Activated T-helper 2 cell treated with anti-CD3 and anti-CD28 coated beads, Interferon-gamma antibody, Interleukin-2, Interleukin-4, amounts not matched to agents 10 μg/mL and 5 μg/mL and 100 μg/mL, durations not matched to agents 14 hours and 24 hours and 36 hours (primary cell): ENCODE measurements at regions of chr1 and their contacts with region 1.

Region 1: DNA sequence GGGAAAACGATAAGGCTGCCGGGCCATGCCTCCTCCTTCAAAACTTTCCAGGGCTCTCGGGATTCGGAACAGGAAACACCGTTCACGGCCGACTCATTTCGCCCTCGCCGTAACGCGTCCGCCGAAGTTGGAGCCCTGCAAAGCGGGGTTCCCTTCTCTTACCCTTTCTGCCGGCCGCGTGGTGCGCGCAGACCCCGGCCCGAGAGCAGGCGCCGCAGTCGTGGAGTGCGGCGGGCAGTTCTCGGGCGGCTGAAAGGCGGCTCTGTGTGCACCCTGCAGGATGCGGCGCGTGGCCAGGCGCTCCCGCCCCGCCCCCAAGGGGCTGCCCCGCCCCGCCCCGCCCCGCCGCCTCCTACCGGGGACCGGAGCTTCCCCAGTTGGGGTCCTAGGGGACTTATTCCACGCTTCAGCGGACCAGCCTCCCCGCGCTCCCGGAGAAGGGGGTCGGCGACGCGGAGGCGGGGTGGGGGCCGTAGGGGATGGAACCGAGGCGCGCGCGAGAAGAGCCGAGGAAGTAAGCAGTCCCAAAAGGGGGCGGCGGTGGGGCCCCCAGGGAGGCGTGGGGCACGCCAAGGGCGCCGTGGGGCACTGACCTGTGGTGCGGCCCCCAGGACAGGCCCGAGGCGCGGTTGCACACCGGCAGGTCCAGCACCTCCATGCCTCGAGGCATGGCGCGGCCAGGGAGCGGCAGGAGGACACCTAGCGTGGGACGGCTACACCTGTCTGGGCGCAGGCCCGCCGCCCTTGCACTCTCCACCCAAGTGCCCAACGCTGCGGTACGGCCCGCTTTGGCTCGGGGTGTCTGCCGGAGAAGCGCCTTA is at the start of gene MCOLN2:
- DNase-seq: peak; percentile 52
- H3K4me3 Mint-ChIP-seq: peak within 1 kb of the TSS; percentile 94
- H3K27ac Mint-ChIP-seq: peak within 1 kb of the TSS; percentile 93
- H3K4me1 Mint-ChIP-seq: peaks cover 52% of the 10 kb centered on the region
- H3K27me3 Mint-ChIP-seq: peaks cover 28% of the 10 kb centered on the region
- total RNA-seq, gene MCOLN2: 142 and 143 TPM in 2 replicates

Region 2: DNA sequence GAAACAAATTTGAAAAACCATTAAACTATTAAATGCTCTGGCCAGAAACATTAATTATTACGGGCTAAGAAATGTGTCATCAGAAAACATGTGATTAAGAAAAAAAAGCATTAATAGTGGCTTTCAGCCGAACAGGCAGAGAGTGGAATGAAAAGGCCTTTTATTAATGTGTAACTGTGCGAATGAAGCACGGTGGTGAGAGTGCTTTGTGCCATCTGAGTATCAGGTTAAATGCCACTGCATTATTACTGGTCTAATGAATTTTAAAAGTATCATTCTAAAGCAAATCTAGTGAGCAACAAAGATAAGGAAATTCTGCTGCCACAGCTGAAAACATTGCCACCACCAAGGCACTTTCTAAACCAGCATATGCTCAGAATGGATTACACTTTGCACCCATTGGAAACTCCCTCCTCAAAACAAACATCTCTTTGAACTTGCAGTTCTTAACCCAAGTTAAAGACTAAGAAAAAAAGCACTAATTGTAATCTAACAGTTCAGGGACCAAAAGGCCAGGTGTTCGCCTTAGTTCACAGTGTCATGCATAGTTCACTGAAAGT is 276.8 kb before region 1 on chr1:
- intact Hi-C with region 1: no loop called
- DNase-seq: no peak
- H3K4me3 Mint-ChIP-seq: no peak overlapping the region
- H3K27ac Mint-ChIP-seq: no peak overlapping the region
- H3K4me1 Mint-ChIP-seq: peaks cover 18% of the 10 kb centered on the region
- H3K27me3 Mint-ChIP-seq: no peaks in the 10 kb centered on the region

Region 3: GRCh38 chr1:84853741-84854721 is 143.0 kb before region 1 on chr1:
- intact Hi-C with region 1: loop called (anchors 5 kb)
- DNase-seq: peak; percentile 45
- H3K4me3 Mint-ChIP-seq: no peak overlapping the region
- H3K27ac Mint-ChIP-seq: peak overlapping the region; percentile 33
- H3K4me1 Mint-ChIP-seq: peaks cover 31% of the 10 kb centered on the region
- H3K27me3 Mint-ChIP-seq: peaks cover 17% of the 10 kb centered on the region

Region 4: DNA sequence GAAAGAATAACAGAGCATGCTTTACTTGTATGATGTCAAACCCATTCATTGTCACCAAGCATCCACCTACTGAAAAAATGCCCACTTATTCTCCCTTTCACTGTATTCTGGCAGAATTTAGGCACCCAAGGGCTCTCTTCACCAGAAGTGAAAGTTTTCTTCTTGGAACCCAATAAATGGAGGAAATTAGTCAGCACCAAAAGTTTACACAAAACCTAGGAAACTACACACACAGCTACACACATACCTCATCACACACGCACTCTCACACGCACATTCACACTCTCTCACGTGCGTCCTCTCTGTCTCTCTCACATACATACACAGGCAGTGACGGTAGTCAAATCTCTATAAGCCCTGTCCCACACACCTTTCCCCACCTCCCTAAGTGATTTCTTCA is 37.8 kb before region 1 on chr1:
- intact Hi-C with region 1: loop called (anchors 1 kb)
- DNase-seq: peak; percentile 51
- H3K4me3 Mint-ChIP-seq: no peak overlapping the region
- H3K27ac Mint-ChIP-seq: peak overlapping the region; percentile 75
- H3K4me1 Mint-ChIP-seq: peaks cover 36% of the 10 kb centered on the region
- H3K27me3 Mint-ChIP-seq: no peaks in the 10 kb centered on the region

Region 5: DNA sequence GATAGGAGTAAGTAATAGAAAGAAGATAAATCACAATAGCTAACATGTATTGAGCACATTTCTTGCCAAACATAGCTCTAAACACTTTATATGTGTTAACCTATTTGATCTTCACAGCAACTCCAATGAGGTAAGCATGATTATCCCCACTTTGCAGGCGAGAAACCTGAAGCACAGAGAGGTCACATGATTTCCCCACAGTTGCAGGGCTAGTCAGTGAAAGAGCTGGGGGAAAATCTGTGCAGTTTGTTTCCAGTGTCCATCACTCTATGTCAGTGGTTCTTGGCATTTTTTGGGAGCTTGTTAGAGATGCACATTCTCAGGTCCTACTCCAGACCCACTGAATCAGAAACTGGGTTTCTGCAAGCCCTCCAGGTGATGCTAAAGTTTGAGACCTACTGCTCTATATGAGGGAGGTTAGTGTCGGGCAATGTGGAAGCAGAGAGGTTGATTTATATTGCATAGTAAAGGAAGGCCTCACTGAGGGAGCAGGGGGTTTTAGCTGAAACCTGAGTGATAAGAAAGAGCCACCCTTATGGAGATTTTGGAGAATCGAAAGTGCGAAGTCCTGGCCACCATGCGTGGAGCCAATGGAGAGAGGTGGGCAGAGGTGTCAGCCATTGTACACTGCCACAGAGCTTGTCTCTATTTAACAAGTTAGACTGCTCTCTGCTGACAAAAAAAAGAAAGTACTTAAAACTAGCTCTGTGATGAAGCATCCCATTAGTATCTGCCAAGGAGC is 30.4 kb after region 1 on chr1:
- intact Hi-C with region 1: loop called (anchors 1 kb)
- DNase-seq: no peak
- H3K4me3 Mint-ChIP-seq: no peak overlapping the region
- H3K27ac Mint-ChIP-seq: no peak overlapping the region
- H3K4me1 Mint-ChIP-seq: peaks cover 11% of the 10 kb centered on the region
- H3K27me3 Mint-ChIP-seq: no peaks in the 10 kb centered on the region

Region 6: GRCh38 chr1:85102474-85102873 is 105.4 kb after region 1 on chr1:
- intact Hi-C with region 1: no loop called
- DNase-seq: no peak
- H3K4me3 Mint-ChIP-seq: no peak overlapping the region
- H3K27ac Mint-ChIP-seq: no peak overlapping the region
- H3K4me1 Mint-ChIP-seq: no peaks in the 10 kb centered on the region
- H3K27me3 Mint-ChIP-seq: peaks cover 30% of the 10 kb centered on the region